Naive thymus-derived CD4-positive, alpha-beta T cell (primary cell): ENCODE measurements at regions of chr12 and their contacts with region 1.

Region 1: GRCh38 chr12:47032644-47033043 is 46.8 kb upstream of the PCED1B start:
- DNase-seq: peak in 7 of 9 donors; percentile 48 to 74 (median 60)
- ATAC-seq: peak; percentile 83
- H3K4me3 ChIP-seq: no peak overlapping the region
- H3K4me3 Mint-ChIP-seq: peak overlapping the region in 6 of 10 donors; percentile 1 to 44 (median 28)
- H3K27ac ChIP-seq: no peak overlapping the region
- H3K27ac Mint-ChIP-seq: peak overlapping the region in 5 of 9 donors; percentile 1 to 36 (median 11)
- H3K4me1 ChIP-seq: peaks cover 0 to 6% of the 10 kb centered on the region in 2 donors
- H3K4me1 Mint-ChIP-seq: peaks cover 9 to 40% (median 24%) of the 10 kb centered on the region in 7 donors
- H3K27me3 ChIP-seq: no peaks in the 10 kb centered on the region
- H3K27me3 Mint-ChIP-seq: peaks cover 0 to 9% (median 0%) of the 10 kb centered on the region in 5 donors

Region 2: DNA sequence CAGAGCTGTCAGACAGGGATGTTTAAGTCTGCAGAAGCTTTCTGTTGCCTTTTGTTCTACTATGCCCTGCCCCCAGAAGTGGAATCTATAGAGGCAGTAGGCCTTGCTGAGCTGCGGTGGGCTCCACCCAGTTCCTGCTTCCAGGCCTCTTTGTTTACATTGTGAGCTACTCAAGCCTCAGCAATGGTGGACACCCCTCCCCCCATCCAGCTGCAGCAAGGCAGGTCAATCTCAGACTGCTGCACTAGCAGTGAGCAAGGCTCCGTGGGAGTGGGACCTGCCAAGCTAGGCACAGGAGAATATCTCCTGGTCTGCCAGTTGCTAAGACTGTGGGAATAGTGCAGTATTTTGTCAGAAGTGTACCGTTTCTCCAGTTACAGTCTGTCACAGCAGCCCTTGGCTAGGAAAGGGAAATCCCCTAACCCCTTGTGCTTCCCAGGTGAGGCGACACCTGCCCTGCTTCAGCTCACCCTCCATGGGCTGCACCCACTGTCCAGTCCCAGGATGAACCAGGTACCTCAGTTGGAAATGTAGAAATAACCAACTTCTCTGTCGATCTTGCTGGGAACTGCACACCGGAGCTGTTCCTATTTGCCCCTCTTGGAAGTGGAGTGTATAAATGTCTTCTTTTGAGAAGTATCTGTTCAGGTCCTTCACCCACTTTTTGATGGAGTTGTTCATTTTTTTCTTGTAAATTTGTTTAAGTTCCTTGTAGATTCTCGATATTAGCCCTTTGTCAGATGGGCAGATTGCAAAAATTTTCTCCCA is 446.6 kb before region 1 on chr12:
- CTCF ChIA-PET with region 1: no interaction called
- POLR2A ChIA-PET with region 1: no interaction called
- intact Hi-C with region 1: no loop called
- DNase-seq: peak in 7 of 9 donors; percentile 33 to 81 (median 71)
- ATAC-seq: peak; percentile 27
- H3K4me3 ChIP-seq: peak overlapping the region; percentile 46
- H3K4me3 Mint-ChIP-seq: peak overlapping the region; percentile 13 to 82 (median 68)
- H3K27ac ChIP-seq: no peak overlapping the region
- H3K27ac Mint-ChIP-seq: peak overlapping the region; percentile 6 to 95 (median 91)
- H3K4me1 ChIP-seq: peaks cover 5 to 21% of the 10 kb centered on the region in 2 donors
- H3K4me1 Mint-ChIP-seq: peaks cover 29 to 79% (median 74%) of the 10 kb centered on the region in 7 donors
- H3K27me3 ChIP-seq: no peaks in the 10 kb centered on the region
- H3K27me3 Mint-ChIP-seq: no peaks in the 10 kb centered on the region

Region 3: GRCh38 chr12:47079468-47079980 is 46.9 kb after region 1 on chr12 and contains the starts of genes AMIGO2 and PCED1B:
- CTCF ChIA-PET with region 1: interaction called, 5 read pairs
- POLR2A ChIA-PET with region 1: interaction called, 15 read pairs
- intact Hi-C with region 1: loop called in 1 of 2 experiments (anchors 2 kb)
- DNase-seq: peak; percentile 31 to 72 (median 51)
- ATAC-seq: peak; percentile 71
- H3K4me3 ChIP-seq: peak within 1 kb of the TSS; percentile 84
- H3K4me3 Mint-ChIP-seq: peak within 1 kb of the TSS; percentile 91 to 100 (median 96)
- H3K27ac ChIP-seq: peak within 1 kb of the TSS; percentile 80
- H3K27ac Mint-ChIP-seq: peak within 1 kb of the TSS; percentile 87 to 99 (median 96)
- H3K4me1 ChIP-seq: peaks cover 39 to 45% of the 10 kb centered on the region in 2 donors
- H3K4me1 Mint-ChIP-seq: peaks cover 44 to 83% (median 74%) of the 10 kb centered on the region in 7 donors
- H3K27me3 ChIP-seq: no peaks in the 10 kb centered on the region
- H3K27me3 Mint-ChIP-seq: no peaks in the 10 kb centered on the region
- total RNA-seq, gene AMIGO2: 6.8 to 13.5 (median 12.8) TPM
- total RNA-seq, gene PCED1B: 41.4 to 98.3 (median 70.0) TPM

Region 4: GRCh38 chr12:47307680-47308399 is 275.2 kb after region 1 on chr12:
- CTCF ChIA-PET with region 1: interaction called, 42 read pairs
- POLR2A ChIA-PET with region 1: interaction called, 11 read pairs
- intact Hi-C with region 1: loop called (anchors 1 kb)
- DNase-seq: peak in 8 of 9 donors; percentile 39 to 76 (median 62)
- ATAC-seq: peak; percentile 96
- H3K4me3 ChIP-seq: peak overlapping the region; percentile 56
- H3K4me3 Mint-ChIP-seq: peak overlapping the region; percentile 91 to 98 (median 94)
- H3K27ac ChIP-seq: peak overlapping the region; percentile 69
- H3K27ac Mint-ChIP-seq: peak overlapping the region; percentile 89 to 97 (median 95)
- H3K4me1 ChIP-seq: peaks cover 0 to 3% of the 10 kb centered on the region in 2 donors
- H3K4me1 Mint-ChIP-seq: peaks cover 27 to 61% (median 51%) of the 10 kb centered on the region in 7 donors
- H3K27me3 ChIP-seq: no peaks in the 10 kb centered on the region
- H3K27me3 Mint-ChIP-seq: no peaks in the 10 kb centered on the region

Region 5: DNA sequence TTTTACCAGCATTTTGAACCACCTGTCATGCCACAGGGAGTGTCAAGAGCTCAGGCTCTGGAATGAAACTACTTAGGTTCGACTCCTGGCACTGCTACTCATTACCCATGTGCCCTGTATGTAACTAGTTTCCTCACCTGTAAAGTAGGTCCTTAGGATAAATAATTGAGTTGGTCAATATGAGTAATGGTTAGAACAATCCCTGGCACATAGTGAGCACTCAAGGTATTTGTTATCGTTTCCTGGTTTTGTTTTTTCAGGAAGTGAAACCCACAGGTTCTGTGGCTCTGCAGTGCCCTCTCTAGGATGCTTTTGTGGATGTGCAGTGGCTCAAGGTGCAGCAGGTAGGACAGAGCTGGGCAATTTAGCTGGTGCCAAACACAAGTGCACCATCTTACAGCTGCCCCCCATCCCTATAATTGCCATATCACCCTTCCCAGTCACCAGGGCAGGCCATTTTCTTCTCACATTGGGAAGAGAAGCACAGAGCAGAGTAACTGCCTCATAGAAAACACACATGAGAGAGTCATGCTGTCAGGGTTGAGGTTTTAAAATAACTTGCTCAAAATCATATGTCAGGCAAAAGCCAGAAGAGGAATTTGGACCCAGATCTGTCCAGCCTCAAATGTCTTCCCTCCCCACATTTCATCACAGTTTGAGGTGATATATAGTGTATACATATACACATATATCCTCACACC is 375.7 kb after region 1 on chr12:
- CTCF ChIA-PET with region 1: interaction called, 34 read pairs
- POLR2A ChIA-PET with region 1: interaction called, 4 read pairs
- intact Hi-C with region 1: loop called in 1 of 2 experiments (anchors 1 kb)
- DNase-seq: peak in 5 of 9 donors; percentile 22 to 55 (median 42)
- ATAC-seq: peak; percentile 71
- H3K4me3 ChIP-seq: no peak overlapping the region
- H3K4me3 Mint-ChIP-seq: peak overlapping the region in 7 of 10 donors; percentile 19 to 66 (median 49)
- H3K27ac ChIP-seq: peak overlapping the region; percentile 3
- H3K27ac Mint-ChIP-seq: peak overlapping the region; percentile 22 to 91 (median 83)
- H3K4me1 ChIP-seq: peaks cover 13 to 65% of the 10 kb centered on the region in 2 donors
- H3K4me1 Mint-ChIP-seq: peaks cover 36 to 89% (median 76%) of the 10 kb centered on the region in 7 donors
- H3K27me3 ChIP-seq: no peaks in the 10 kb centered on the region
- H3K27me3 Mint-ChIP-seq: no peaks in the 10 kb centered on the region

Region 6: GRCh38 chr12:47686645-47687240 is 654.1 kb after region 1 on chr12:
- CTCF ChIA-PET with region 1: interaction called, 17 read pairs
- POLR2A ChIA-PET with region 1: no interaction called
- intact Hi-C with region 1: loop called (anchors 1 kb)
- DNase-seq: peak in 7 of 9 donors; percentile 21 to 53 (median 43)
- ATAC-seq: peak; percentile 76
- H3K4me3 ChIP-seq: no peak overlapping the region
- H3K4me3 Mint-ChIP-seq: no peak overlapping the region
- H3K27ac ChIP-seq: no peak overlapping the region
- H3K27ac Mint-ChIP-seq: no peak overlapping the region
- H3K4me1 ChIP-seq: peaks cover 0 to 3% of the 10 kb centered on the region in 2 donors
- H3K4me1 Mint-ChIP-seq: peaks cover 9 to 19% (median 14%) of the 10 kb centered on the region in 7 donors
- H3K27me3 ChIP-seq: no peaks in the 10 kb centered on the region
- H3K27me3 Mint-ChIP-seq: no peaks in the 10 kb centered on the region

Region 7: DNA sequence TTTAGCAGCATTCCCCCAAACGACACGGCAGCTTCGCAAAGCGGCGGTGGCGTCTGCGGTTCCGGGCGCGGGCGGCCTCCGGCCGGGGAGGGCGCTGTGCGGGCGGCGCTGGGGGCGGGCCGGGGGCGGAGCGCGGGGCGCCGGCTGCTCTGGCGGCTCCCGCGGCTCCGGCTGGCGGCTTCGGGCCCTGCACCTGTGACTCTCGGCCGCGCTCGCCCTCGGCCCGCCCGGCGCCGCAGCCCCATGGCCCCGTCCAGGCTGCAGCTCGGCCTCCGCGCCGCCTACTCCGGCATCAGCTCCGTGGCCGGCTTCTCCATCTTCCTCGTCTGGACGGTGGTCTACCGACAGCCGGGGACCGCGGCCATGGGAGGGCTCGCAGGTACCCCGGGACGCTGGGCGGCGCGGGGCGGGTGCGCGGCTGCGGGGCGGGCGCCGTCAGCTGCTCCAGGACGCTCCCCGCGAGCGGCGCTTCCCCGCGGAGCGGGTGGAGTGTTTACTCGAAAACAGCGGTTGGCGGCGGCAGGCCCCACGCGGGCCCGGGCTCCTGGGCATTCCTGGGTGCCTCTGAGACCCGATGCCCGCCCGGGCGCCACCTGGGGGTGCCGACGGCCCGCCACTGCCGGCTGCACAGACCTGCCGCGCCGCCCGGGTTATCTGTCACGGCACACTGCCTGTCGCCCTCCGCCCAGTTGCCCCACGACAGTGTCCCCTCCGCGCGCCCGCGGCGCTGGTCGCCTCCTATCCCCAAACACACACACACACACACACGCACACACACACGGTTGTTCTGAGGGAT is 740.6 kb after region 1 on chr12 and contains the start of gene SLC48A1:
- CTCF ChIA-PET with region 1: no interaction called
- POLR2A ChIA-PET with region 1: no interaction called
- intact Hi-C with region 1: loop called in 1 of 2 experiments (anchors 5 kb)
- DNase-seq: peak; percentile 63 to 84 (median 80)
- ATAC-seq: peak; percentile 96
- H3K4me3 ChIP-seq: peak within 1 kb of the TSS; percentile 59
- H3K4me3 Mint-ChIP-seq: peak within 1 kb of the TSS in 9 of 10 donors; percentile 83 to 94 (median 91)
- H3K27ac ChIP-seq: peak within 1 kb of the TSS; percentile 74
- H3K27ac Mint-ChIP-seq: peak within 1 kb of the TSS; percentile 75 to 94 (median 80)
- H3K4me1 ChIP-seq: peaks cover 7 to 8% of the 10 kb centered on the region in 2 donors
- H3K4me1 Mint-ChIP-seq: peaks cover 7 to 47% (median 25%) of the 10 kb centered on the region in 7 donors
- H3K27me3 ChIP-seq: no peaks in the 10 kb centered on the region
- H3K27me3 Mint-ChIP-seq: peaks cover 0 to 8% (median 0%) of the 10 kb centered on the region in 5 donors
- total RNA-seq, gene SLC48A1: 6.7 to 14.3 (median 10.0) TPM